ENCODE measurements at regions of chr1 and their contacts with region 1.

Region 1: GRCh38 chr1:85705940-85706339 is 2.3 kb downstream of the ZNHIT6 start:
- DNase-seq: no peak
- ATAC-seq: no peak
- H3K4me3 Mint-ChIP-seq: peak overlapping the region; percentile 43
- H3K27ac Mint-ChIP-seq: no peak overlapping the region
- H3K4me1 Mint-ChIP-seq: peaks cover 24% of the 10 kb centered on the region
- H3K27me3 Mint-ChIP-seq: no peaks in the 10 kb centered on the region

Region 2: GRCh38 chr1:85692730-85693314 is 13.1 kb before region 1 on chr1:
- CTCF ChIA-PET with region 1: interaction called, 12 read pairs
- DNase-seq: no peak
- ATAC-seq: no peak
- H3K4me3 Mint-ChIP-seq: no peak overlapping the region
- H3K27ac Mint-ChIP-seq: no peak overlapping the region
- H3K4me1 Mint-ChIP-seq: no peaks in the 10 kb centered on the region
- H3K27me3 Mint-ChIP-seq: no peaks in the 10 kb centered on the region